ENCODE measurements at regions of chr4 and their contacts with region 1.

Region 1: DNA sequence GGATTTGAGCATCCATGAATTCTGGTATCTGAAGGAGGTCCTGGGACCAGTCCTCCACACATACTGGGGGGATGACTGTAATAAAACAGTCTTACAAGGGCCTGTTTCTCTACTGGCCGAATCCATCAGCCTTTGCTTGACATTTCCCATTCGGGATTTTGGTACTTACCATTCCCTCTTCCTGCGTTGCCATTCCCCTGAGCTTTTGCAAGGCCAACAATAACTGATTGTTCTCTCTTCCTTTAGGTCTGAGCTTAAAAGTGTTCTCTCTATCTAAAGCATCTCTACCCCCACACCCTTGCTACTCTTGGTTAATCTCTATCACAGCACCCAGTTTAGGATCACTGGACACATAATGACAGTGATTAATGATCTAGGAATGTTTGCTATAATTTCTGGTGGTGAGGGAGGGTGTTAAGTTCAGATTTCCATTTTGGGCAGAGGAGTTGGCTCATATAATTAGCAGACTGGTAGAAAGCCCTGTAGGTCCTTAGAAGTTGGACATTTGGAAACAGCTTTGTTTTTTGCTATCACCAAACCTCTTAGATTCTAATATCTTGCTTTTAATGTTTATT is 29.4 kb downstream of the TMA16 start:
- DNase-seq: no peak
- CTCF ChIP-seq: no peak

Region 2: GRCh38 chr4:163535657-163536056 is 11.8 kb after region 1 on chr4:
- CTCF ChIA-PET with region 1: interaction called, 15 read pairs
- POLR2A ChIA-PET with region 1: no interaction called
- DNase-seq: no peak
- CTCF ChIP-seq: no peak

Measured in GM10248 (cell line).